ENCODE measurements at regions of chr11 and their contacts with region 1.

Region 1: DNA sequence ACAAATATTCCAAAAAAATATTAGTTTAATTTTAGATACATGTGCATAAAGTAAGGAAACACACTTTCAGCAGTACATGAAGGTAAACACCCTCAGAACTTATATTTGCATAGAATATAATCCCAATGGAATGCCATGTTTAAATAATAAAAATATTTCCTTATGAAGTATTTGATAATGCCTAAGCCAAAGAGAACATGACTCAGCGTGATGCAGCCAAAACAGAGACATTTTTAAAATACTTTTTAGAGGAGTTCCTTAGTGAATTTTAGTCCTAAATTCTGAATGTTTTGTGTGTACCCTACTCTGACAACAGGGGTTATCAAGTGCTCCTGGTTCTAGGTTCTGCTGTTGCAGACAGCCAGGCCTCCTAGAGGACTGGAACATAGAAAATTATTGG is 39.1 kb upstream of the POU2AF2 start:
- DNase-seq: no peak
- CTCF ChIP-seq: no peak

Region 2: DNA sequence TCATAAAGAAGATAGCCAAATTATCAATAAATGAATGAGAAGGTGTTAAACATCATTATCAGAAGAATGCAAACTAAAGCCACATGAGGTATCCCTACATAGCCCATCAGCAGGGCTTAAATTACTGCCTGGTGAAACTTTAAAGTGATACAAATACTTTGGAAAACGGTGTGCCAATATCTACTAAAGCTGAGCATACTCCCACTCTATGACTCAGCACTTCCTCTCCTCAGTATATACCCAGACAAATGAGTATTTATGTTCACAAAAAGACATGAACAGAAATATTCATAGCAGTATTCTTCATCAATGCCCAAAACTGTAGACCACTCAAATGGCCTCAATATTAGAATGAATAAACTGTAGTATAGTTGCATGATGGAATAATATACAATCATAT is 1397.9 kb before region 1 on chr11:
- in situ Hi-C with region 1: loop called (anchors 25 kb)
- DNase-seq: no peak
- CTCF ChIP-seq: no peak

Region 3: GRCh38 chr11:111047374-111047773 is 159.1 kb before region 1 on chr11:
- in situ Hi-C with region 1: no loop called
- DNase-seq: no peak
- CTCF ChIP-seq: no peak